CD4-positive, alpha-beta T cell (primary cell): ENCODE measurements at regions of chr7 and their contacts with region 1.

Region 1: DNA sequence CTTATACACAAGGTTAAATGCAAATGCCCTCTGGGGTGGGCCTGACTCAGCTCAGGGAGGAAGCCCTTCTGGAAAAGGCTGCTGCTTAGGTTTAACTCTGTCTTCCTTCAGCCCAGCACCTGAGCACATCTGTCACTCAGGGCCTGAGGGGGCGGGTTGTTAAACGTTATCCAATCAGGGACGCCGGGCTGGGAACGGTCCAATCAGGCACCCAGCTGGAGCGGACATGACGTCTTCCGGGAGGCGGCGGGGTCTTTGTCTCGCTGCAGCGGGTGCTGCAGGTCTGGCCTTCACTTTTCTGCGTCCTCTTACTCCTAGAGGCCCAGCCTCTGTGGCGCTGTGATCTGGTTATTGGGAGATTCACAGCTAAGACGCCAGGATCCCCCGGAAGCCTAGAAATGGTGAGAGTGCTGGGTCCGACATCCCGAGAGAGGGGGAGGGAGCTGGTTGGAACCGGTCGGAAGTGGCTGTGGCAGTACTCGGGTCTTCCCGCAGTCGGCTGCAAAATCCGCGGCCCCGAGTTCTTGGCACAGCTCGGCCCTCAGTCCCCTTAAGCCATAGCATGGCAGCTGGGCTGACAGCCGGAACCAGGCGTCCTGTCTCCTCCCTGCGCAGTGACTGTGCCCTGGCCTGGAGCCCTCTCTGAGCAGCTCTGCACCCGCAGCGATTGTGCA is at the start of gene ZNF138:
- DNase-seq: peak; percentile 86 to 96 (median 92)
- ATAC-seq: peak; percentile 99
- H3K4me3 ChIP-seq: peak within 1 kb of the TSS; percentile 98
- H3K4me3 Mint-ChIP-seq: peak within 1 kb of the TSS; percentile 98
- H3K27ac ChIP-seq: peak within 1 kb of the TSS; percentile 72 to 88
- H3K27ac Mint-ChIP-seq: peak within 1 kb of the TSS; percentile 98
- H3K4me1 ChIP-seq: peaks cover 27% of the 10 kb centered on the region
- H3K4me1 Mint-ChIP-seq: peaks cover 36% of the 10 kb centered on the region
- H3K27me3 ChIP-seq: no peaks in the 10 kb centered on the region
- H3K27me3 Mint-ChIP-seq: no peaks in the 10 kb centered on the region
- CTCF ChIP-seq: no peak
- total RNA-seq, gene ZNF138: 5.6 to 7.3 TPM

Region 2: GRCh38 chr7:63900394-63901203 is 893.7 kb before region 1 on chr7:
- CTCF ChIA-PET with region 1: no interaction called
- POLR2A ChIA-PET with region 1: interaction called, 5 read pairs
- intact Hi-C with region 1: loop called in 1 of 2 experiments (anchors 5 kb)
- DNase-seq: peak; percentile 79 to 96 (median 86)
- ATAC-seq: peak; percentile 93
- H3K4me3 ChIP-seq: peak overlapping the region; percentile 73
- H3K4me3 Mint-ChIP-seq: peak overlapping the region; percentile 99
- H3K27ac ChIP-seq: peak overlapping the region; percentile 55 to 87
- H3K27ac Mint-ChIP-seq: peak overlapping the region; percentile 84
- H3K4me1 ChIP-seq: peaks cover 19% of the 10 kb centered on the region
- H3K4me1 Mint-ChIP-seq: peaks cover 12% of the 10 kb centered on the region
- H3K27me3 ChIP-seq: no peaks in the 10 kb centered on the region
- H3K27me3 Mint-ChIP-seq: no peaks in the 10 kb centered on the region
- CTCF ChIP-seq: no peak

Region 3: DNA sequence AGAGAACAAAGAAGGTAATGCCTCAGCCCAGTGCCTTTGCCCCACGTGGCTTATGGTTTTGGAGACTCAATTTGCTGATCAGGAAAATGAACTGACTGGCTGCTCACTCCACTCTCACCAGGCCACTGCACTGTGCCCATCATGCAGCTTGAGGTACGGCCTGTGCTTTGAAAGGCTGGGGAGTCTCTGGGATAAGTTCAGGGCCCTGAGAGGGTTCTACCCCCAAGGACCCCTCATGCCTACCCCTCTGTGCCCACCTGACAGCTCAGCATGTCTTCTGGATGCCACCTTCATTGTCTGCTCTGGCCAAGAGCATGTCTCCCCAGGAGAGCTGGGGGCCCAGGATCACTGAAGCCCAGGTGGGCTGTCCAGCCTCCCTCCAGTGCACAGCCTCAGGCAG is 841.1 kb before region 1 on chr7:
- CTCF ChIA-PET with region 1: no interaction called
- POLR2A ChIA-PET with region 1: no interaction called
- intact Hi-C with region 1: no loop called
- DNase-seq: no peak
- ATAC-seq: no peak
- H3K4me3 ChIP-seq: no peak overlapping the region
- H3K4me3 Mint-ChIP-seq: no peak overlapping the region
- H3K27ac ChIP-seq: no peak overlapping the region
- H3K27ac Mint-ChIP-seq: no peak overlapping the region
- H3K4me1 ChIP-seq: no peaks in the 10 kb centered on the region
- H3K4me1 Mint-ChIP-seq: no peaks in the 10 kb centered on the region
- H3K27me3 ChIP-seq: no peaks in the 10 kb centered on the region
- H3K27me3 Mint-ChIP-seq: no peaks in the 10 kb centered on the region
- CTCF ChIP-seq: no peak

Region 4: DNA sequence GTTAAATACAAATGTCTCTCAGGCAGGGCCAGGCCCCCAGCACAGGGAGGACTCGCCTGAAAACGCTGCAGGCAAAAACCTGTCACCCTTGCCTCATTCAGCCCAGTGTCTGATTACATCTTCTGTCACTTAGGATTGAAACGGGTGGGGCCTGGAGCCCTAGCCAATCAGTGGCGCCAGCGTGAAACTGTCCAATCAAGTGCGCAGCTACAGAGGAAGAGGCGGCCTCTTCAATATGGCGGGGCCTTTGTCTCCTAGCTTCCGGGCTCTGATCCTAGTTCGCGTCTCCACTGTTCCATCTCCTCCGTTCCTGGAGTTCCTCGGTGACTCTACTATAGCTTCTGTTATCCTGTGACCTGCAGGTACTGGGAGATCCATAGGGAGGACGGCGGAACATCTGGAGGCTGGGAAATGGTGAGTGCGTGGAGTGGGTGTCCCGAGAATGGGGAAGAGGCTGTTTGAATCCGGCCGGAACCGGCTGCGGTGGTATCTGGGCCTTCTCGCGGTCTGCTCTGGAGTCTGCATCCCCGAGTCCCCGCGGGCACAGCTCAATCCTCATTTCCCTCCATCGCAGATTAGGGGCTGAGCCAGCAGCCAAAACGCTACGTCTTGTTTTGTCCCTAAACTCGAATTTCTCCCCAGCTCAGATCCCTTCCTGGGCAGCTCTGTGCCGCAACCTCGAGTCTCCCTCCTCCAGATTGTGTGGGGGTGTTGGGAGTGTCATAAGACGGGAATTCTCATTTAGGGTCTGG is 480.4 kb before region 1 on chr7 and contains the start of gene ZNF736:
- CTCF ChIA-PET with region 1: no interaction called
- POLR2A ChIA-PET with region 1: interaction called, 10 read pairs
- intact Hi-C with region 1: loop called in 1 of 2 experiments (anchors 5 kb)
- DNase-seq: peak; percentile 76 to 95 (median 82)
- ATAC-seq: peak; percentile 100
- H3K4me3 ChIP-seq: peak within 1 kb of the TSS; percentile 99
- H3K4me3 Mint-ChIP-seq: peak within 1 kb of the TSS; percentile 96
- H3K27ac ChIP-seq: peak within 1 kb of the TSS in 1 of 2 donors; percentile 84
- H3K27ac Mint-ChIP-seq: peak within 1 kb of the TSS; percentile 93
- H3K4me1 ChIP-seq: peaks cover 23% of the 10 kb centered on the region
- H3K4me1 Mint-ChIP-seq: peaks cover 33% of the 10 kb centered on the region
- H3K27me3 ChIP-seq: no peaks in the 10 kb centered on the region
- H3K27me3 Mint-ChIP-seq: no peaks in the 10 kb centered on the region
- CTCF ChIP-seq: no peak
- total RNA-seq, gene ZNF736: 29.9 to 30.8 TPM

Region 5: GRCh38 chr7:64665980-64666662 is 128.2 kb before region 1 on chr7 and contains the start of gene ZNF107:
- CTCF ChIA-PET with region 1: no interaction called
- POLR2A ChIA-PET with region 1: interaction called, 46 read pairs
- intact Hi-C with region 1: loop called (anchors 1 to 2 kb)
- DNase-seq: peak; percentile 71 to 96 (median 79)
- ATAC-seq: peak; percentile 95
- H3K4me3 ChIP-seq: peak within 1 kb of the TSS; percentile 83
- H3K4me3 Mint-ChIP-seq: peak within 1 kb of the TSS; percentile 98
- H3K27ac ChIP-seq: peak within 1 kb of the TSS; percentile 82
- H3K27ac Mint-ChIP-seq: peak within 1 kb of the TSS; percentile 98
- H3K4me1 ChIP-seq: peaks cover 23% of the 10 kb centered on the region
- H3K4me1 Mint-ChIP-seq: peaks cover 76% of the 10 kb centered on the region
- H3K27me3 ChIP-seq: no peaks in the 10 kb centered on the region
- H3K27me3 Mint-ChIP-seq: no peaks in the 10 kb centered on the region
- CTCF ChIP-seq: no peak
- total RNA-seq, gene ZNF107: 12.4 TPM

Region 6: DNA sequence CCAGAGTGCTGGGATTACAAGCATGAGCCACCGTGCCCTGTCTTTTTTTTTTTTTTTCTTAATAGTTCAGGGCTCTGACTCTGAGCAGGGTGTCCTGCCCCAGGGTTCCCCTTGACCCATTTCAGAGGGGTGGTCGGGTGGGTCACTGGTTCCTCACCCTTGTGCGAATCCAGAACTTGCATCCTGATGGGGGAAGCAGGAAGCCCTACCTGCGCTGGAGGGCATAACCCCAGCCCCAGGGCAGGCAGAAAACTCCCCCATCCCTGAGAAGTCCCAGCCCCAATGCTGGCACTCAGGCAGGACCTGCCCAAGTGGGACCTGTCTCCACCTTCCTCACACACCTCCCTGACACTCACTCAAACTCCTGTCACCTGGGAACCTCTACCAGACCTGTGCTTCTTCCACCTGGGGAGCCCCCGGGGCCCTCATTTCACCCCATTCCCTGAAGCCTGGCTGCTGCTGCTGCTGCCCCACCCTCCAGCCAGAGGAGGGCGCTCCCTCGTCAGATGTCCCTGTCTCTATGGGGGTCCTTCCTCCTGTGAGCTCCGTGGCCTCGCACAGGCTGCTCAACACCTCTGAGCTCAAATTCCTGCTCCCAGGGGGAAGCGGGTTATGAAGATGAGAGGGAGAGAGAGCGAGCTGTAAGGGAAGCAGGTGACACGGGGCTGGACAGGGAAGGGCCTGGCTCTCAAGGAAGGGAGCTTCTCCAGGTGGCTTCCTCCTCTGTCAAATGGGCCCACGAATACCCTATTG is 93.6 kb after region 1 on chr7:
- CTCF ChIA-PET with region 1: no interaction called
- POLR2A ChIA-PET with region 1: interaction called, 4 read pairs
- intact Hi-C with region 1: loop called in 1 of 2 experiments (anchors 5 kb)
- DNase-seq: peak in 13 of 14 experiments; percentile 8 to 65 (median 32)
- ATAC-seq: peak; percentile 77
- H3K4me3 ChIP-seq: peak overlapping the region; percentile 52
- H3K4me3 Mint-ChIP-seq: peak overlapping the region; percentile 93
- H3K27ac ChIP-seq: no peak overlapping the region
- H3K27ac Mint-ChIP-seq: no peak overlapping the region
- H3K4me1 ChIP-seq: peaks cover 30% of the 10 kb centered on the region
- H3K4me1 Mint-ChIP-seq: peaks cover 18% of the 10 kb centered on the region
- H3K27me3 ChIP-seq: peaks cover 42 to 55% of the 10 kb centered on the region in 2 experiments
- H3K27me3 Mint-ChIP-seq: peaks cover 82% of the 10 kb centered on the region
- CTCF ChIP-seq: peak; percentile 54

Region 7: GRCh38 chr7:65006094-65006992 is 212.0 kb after region 1 on chr7 and contains the start of gene ERV3-1:
- CTCF ChIA-PET with region 1: no interaction called
- POLR2A ChIA-PET with region 1: interaction called, 17 read pairs
- intact Hi-C with region 1: loop called in 1 of 2 experiments (anchors 10 kb)
- DNase-seq: peak; percentile 84 to 97 (median 90)
- ATAC-seq: peak; percentile 99
- H3K4me3 ChIP-seq: peak within 1 kb of the TSS; percentile 75
- H3K4me3 Mint-ChIP-seq: peak within 1 kb of the TSS; percentile 96
- H3K27ac ChIP-seq: peak within 1 kb of the TSS; percentile 49
- H3K27ac Mint-ChIP-seq: peak within 1 kb of the TSS; percentile 88
- H3K4me1 ChIP-seq: peaks cover 21% of the 10 kb centered on the region
- H3K4me1 Mint-ChIP-seq: peaks cover 45% of the 10 kb centered on the region
- H3K27me3 ChIP-seq: no peaks in the 10 kb centered on the region
- H3K27me3 Mint-ChIP-seq: no peaks in the 10 kb centered on the region
- CTCF ChIP-seq: no peak
- total RNA-seq, gene ERV3-1: 16.6 to 17.2 TPM

Region 8: GRCh38 chr7:65373608-65374351 is 579.5 kb after region 1 on chr7 and contains the start of gene ZNF92:
- CTCF ChIA-PET with region 1: no interaction called
- POLR2A ChIA-PET with region 1: interaction called, 6 read pairs
- intact Hi-C with region 1: loop called in 1 of 2 experiments (anchors 5 kb)
- DNase-seq: peak; percentile 89 to 98 (median 92)
- ATAC-seq: peak; percentile 98
- H3K4me3 ChIP-seq: peak within 1 kb of the TSS; percentile 97
- H3K4me3 Mint-ChIP-seq: peak within 1 kb of the TSS; percentile 95
- H3K27ac ChIP-seq: peak within 1 kb of the TSS; percentile 67 to 85
- H3K27ac Mint-ChIP-seq: peak within 1 kb of the TSS; percentile 94
- H3K4me1 ChIP-seq: peaks cover 38% of the 10 kb centered on the region
- H3K4me1 Mint-ChIP-seq: peaks cover 47% of the 10 kb centered on the region
- H3K27me3 ChIP-seq: no peaks in the 10 kb centered on the region
- H3K27me3 Mint-ChIP-seq: no peaks in the 10 kb centered on the region
- CTCF ChIP-seq: no peak
- total RNA-seq, gene ZNF92: 29.7 to 30.1 TPM

Region 9: GRCh38 chr7:66221442-66221841 is 1427.1 kb after region 1 on chr7:
- CTCF ChIA-PET with region 1: no interaction called
- POLR2A ChIA-PET with region 1: no interaction called
- intact Hi-C with region 1: no loop called
- DNase-seq: no peak
- ATAC-seq: no peak
- H3K4me3 ChIP-seq: no peak overlapping the region
- H3K4me3 Mint-ChIP-seq: no peak overlapping the region
- H3K27ac ChIP-seq: no peak overlapping the region
- H3K27ac Mint-ChIP-seq: no peak overlapping the region
- H3K4me1 ChIP-seq: no peaks in the 10 kb centered on the region
- H3K4me1 Mint-ChIP-seq: peaks cover 5% of the 10 kb centered on the region
- H3K27me3 ChIP-seq: peaks cover 0 to 3% of the 10 kb centered on the region in 2 experiments
- H3K27me3 Mint-ChIP-seq: peaks cover 20% of the 10 kb centered on the region
- CTCF ChIP-seq: no peak